A673 (cell line): ENCODE measurements at regions of chr1 and their contacts with region 1.

Region 1: GRCh38 chr1:88330201-88330600 is 353.9 kb upstream of the PKN2 start:
- DNase-seq: no peak
- H3K4me3 ChIP-seq: no peak overlapping the region
- H3K27ac ChIP-seq: no peak overlapping the region
- H3K4me1 ChIP-seq: peaks cover 19% of the 10 kb centered on the region
- H3K27me3 ChIP-seq: no peaks in the 10 kb centered on the region
- CTCF ChIP-seq: no peak

Region 2: DNA sequence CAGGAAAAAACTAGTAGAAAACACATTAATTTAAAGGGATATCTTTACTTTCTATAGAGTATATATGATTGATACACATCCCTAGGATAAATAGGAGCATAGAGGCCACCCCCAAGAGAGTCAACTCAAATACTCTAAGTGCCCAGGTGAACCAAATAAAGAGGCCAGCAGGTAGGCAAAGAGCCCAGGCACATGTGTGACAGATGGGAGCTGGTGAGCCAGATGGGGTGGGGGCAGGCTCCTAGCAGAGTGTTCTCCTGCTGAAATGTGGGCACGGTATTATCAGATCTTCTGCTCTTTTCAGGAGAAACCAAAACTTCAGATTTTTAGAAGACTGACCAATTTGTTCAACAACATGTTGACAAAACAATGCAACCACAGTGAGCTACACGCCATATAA is 20.4 kb after region 1 on chr1:
- CTCF ChIA-PET with region 1: no interaction called
- POLR2A ChIA-PET with region 1: no interaction called
- intact Hi-C with region 1: loop called (anchors 2 kb)
- DNase-seq: no peak
- H3K4me3 ChIP-seq: no peak overlapping the region
- H3K27ac ChIP-seq: no peak overlapping the region
- H3K4me1 ChIP-seq: no peaks in the 10 kb centered on the region
- H3K27me3 ChIP-seq: no peaks in the 10 kb centered on the region
- CTCF ChIP-seq: no peak